K562 (cell line): ENCODE measurements at regions of chr12 and their contacts with region 1.

Region 1: DNA sequence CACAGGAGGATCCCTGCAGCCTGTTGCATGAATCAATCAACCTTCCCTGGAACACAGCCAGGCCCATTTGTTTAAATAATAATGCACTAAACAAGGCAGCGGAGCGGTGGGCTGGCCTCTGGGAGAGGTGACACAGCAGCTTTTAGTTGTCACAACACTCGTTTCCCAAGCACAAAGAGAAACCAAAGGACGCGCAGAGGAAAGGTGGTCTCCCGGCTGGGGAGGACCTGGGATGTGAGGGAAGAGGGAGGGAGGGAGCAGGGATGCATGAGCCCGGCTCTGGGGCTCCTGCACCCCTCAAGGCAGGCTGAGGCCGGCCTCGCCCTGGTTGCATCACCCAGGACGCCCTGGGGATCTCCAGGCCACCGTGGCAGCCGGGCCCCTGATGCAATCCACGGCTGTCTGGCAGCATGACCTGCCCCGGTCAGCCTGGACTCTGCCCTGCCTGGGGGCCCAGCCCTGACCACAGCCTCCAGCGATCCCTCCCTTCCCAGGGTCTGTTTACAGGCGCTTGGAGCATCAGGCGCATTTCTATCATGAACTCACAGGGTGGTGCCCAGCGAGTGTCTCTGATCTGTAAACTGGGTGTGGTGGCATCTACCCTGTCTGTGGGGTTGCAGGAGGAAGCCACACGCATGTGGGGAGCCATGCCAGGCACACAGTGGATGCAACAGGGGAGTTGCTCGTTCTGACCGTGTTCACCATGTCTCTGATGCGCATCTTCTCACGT is 32.5 kb downstream of the MMP17 start:
- DNase-seq: peak; percentile 66 to 89 (median 74)
- ATAC-seq: peak; percentile 92
- H3K4me3 ChIP-seq: peak overlapping the region; percentile 17; the same call in 1 of the 2 replicates
- H3K27ac ChIP-seq: peak overlapping the region; percentile 84
- H3K4me1 ChIP-seq: peaks cover 26 to 58% of the 10 kb centered on the region in 2 experiments; a peak in 4 of 5 replicates
- H3K27me3 ChIP-seq: no peaks in the 10 kb centered on the region
- CTCF ChIP-seq: no peak
- EP300 ChIP-seq: peak; percentile 64
- POLR2A ChIP-seq: 0 out of 2 replicates have a peak, but pooled peaks have one; percentile 51
- RAD21 ChIP-seq: peak in 1 of 2 experiments; percentile 7; a peak in 2 of 4 replicates

Region 2: GRCh38 chr12:131894313-131894860 is 33.7 kb after region 1 on chr12 and contains the start of gene ULK1:
- CTCF ChIA-PET with region 1: no interaction called
- POLR2A ChIA-PET with region 1: interaction called, 4 read pairs
- in situ Hi-C with region 1: no loop called
- intact Hi-C with region 1: loop called (anchors 2 kb)
- DNase-seq: peak; percentile 92 to 100 (median 99)
- ATAC-seq: peak; percentile 75
- H3K4me3 ChIP-seq: peak within 1 kb of the TSS; percentile 53
- H3K27ac ChIP-seq: peak within 1 kb of the TSS; percentile 86
- H3K4me1 ChIP-seq: peaks cover 4 to 34% of the 10 kb centered on the region in 2 experiments; a peak in 4 of 5 replicates
- H3K27me3 ChIP-seq: peaks cover 0 to under 1% of the 10 kb centered on the region in 2 experiments; a peak in 2 of 5 replicates
- CTCF ChIP-seq: no peak
- EP300 ChIP-seq: no peak
- POLR2A ChIP-seq: peak; percentile 78
- RAD21 ChIP-seq: no peak
- polyA plus RNA-seq, gene ULK1: 0.15 to 0.29 TPM

Region 3: DNA sequence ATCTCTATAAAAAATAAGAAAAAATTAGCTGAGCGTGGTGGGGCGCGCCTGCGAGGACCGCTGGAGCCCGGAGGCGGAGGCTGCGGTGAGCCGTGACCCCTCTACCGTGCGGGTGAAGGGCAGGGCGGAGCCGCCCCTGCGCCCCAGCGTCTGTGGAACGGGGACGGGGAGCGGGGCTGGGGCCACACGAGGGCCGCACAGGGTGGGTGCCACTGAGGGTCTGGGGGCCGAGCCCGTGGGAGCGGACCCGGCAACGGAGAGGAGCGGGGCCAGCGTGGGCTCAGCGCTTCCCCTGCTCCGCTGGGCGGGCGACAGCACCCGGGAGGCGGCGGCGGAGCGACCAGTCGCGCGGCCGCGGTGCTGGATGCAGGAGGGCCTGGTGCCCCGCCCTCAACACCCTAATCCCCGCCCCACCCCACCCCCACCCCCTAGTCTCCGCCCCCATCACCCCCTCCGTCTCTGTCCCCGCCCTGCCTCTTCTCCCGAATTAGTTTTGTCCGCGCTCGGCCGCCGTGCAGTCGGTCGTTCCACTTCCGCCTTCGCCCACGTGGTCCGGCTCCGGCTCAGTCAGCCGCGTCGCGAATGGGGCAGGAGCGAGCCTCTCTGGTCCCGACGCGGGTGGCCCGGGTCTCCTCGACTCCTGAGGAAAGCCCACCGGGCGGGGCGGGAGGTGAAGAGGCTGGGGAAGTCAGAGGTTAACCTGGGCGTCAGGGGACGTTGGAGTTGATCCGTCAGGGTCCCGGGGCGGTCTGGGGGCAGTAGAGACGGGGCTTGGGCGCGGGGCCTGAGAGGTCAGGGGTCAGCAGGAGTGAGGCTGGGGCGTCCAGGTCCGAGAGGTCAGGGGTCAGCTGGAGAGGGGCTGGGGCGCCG is 68.2 kb after region 1 on chr12 and contains the start of gene PUS1:
- CTCF ChIA-PET with region 1: no interaction called
- POLR2A ChIA-PET with region 1: interaction called, 11 read pairs
- in situ Hi-C with region 1: no loop called
- intact Hi-C with region 1: loop called (anchors 1 kb)
- DNase-seq: peak; percentile 96 to 99 (median 97)
- ATAC-seq: peak; percentile 90
- H3K4me3 ChIP-seq: peak within 1 kb of the TSS; percentile 84
- H3K27ac ChIP-seq: peak within 1 kb of the TSS; percentile 97
- H3K4me1 ChIP-seq: peaks cover 14 to 38% of the 10 kb centered on the region in 2 experiments; a peak in 4 of 5 replicates
- H3K27me3 ChIP-seq: no peaks in the 10 kb centered on the region
- CTCF ChIP-seq: no peak; a peak in 1 of 6 replicates
- EP300 ChIP-seq: no peak
- POLR2A ChIP-seq: peak; percentile 87
- RAD21 ChIP-seq: no peak
- polyA plus RNA-seq, gene PUS1: 1.9 to 3.8 TPM